SK-N-SH (cell line): ENCODE measurements at regions of chr16 and their contacts with region 1.

Region 1: DNA sequence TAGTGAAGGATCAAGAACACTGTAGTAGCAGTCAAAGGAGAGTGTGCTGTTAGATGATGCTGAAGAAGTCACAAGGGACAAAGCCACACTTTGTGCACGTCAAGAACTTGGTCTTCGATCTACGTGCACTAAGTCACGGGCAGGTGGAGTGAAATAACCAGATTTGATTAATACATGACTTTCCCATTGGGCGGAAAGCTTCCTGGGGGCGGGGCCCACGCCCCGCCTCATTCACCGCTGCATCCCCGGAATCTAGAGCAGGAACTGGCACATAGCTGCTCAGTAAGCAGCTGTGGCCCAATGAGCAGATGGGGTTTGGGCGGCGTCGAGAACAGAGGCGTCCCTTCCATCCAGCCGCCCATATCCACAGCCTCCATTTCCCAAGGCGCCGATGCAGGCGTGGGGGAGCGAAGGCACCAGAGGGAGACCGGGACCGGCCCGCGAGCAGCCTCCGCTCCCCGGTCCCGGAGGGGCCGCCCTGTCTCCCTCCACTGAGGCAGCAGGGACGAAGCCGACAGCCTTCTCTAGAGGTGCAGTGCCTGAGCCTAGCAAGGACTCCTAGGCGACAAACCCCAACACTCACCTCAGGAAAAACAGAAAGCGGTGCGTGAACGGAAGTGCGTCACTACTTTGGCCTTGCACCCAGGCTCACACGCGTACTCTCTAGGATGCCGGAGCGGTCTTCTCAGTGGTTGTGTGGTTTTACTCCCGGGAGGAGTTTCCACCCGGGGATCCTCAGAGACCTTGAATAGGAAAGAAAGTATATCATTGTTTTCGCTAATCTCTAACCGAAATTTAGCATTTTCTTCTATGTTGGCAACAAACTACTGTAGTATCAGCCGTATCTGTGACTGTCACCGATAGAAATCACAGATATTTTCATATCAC is 4.9 kb downstream of the ZNF19 start:
- DNase-seq: peak; percentile 89
- H3K4me3 ChIP-seq: peak overlapping the region; percentile 89 to 90
- H3K27ac ChIP-seq: peak overlapping the region; percentile 93 to 97
- H3K4me1 ChIP-seq: peaks cover 0 to 8% of the 10 kb centered on the region in 2 experiments; a peak in 2 of 4 replicates
- H3K27me3 ChIP-seq: no peaks in the 10 kb centered on the region
- CTCF ChIP-seq: no peak
- EP300 ChIP-seq: no peak
- RAD21 ChIP-seq: no peak

Region 2: GRCh38 chr16:71461686-71462648 is 22.3 kb before region 1 on chr16 and contains the start of gene ZNF23:
- CTCF ChIA-PET with region 1: interaction called, 19 read pairs
- POLR2A ChIA-PET with region 1: interaction called, 31 read pairs
- DNase-seq: peak; percentile 96
- H3K4me3 ChIP-seq: peak within 1 kb of the TSS; percentile 96 to 98
- H3K27ac ChIP-seq: peak within 1 kb of the TSS; percentile 60 to 77
- H3K4me1 ChIP-seq: peaks cover 3 to 11% of the 10 kb centered on the region in 2 experiments; a peak in 3 of 4 replicates
- H3K27me3 ChIP-seq: no peaks in the 10 kb centered on the region
- CTCF ChIP-seq: peak; percentile 42
- EP300 ChIP-seq: no peak; a peak in 1 of 4 replicates
- RAD21 ChIP-seq: no peak
- polyA plus RNA-seq, gene ZNF23: 6.5 and 7.3 TPM in 2 replicates